ENCODE measurements at regions of chr6 and their contacts with region 1.

Region 1: GRCh38 chr6:78561015-78561414 is 306.3 kb upstream of the IRAK1BP1 start:
- DNase-seq: peak; percentile 49
- H3K4me3 ChIP-seq: no peak overlapping the region
- H3K27ac ChIP-seq: peak overlapping the region; percentile 18
- H3K4me1 ChIP-seq: peaks cover 38% of the 10 kb centered on the region
- H3K27me3 ChIP-seq: no peaks in the 10 kb centered on the region
- CTCF ChIP-seq: no peak
- POLR2A ChIP-seq: no peak

Region 2: GRCh38 chr6:78492351-78493017 is 68.5 kb before region 1 on chr6:
- CTCF ChIA-PET with region 1: interaction called, 4 read pairs
- POLR2A ChIA-PET with region 1: no interaction called
- dilution Hi-C with region 1: no loop called
- intact Hi-C with region 1: loop called (anchors 5 kb)
- DNase-seq: peak; percentile 82
- H3K4me3 ChIP-seq: peak overlapping the region in 1 of 3 experiments; percentile 19
- H3K27ac ChIP-seq: peak overlapping the region; percentile 63
- H3K4me1 ChIP-seq: peaks cover 53% of the 10 kb centered on the region
- H3K27me3 ChIP-seq: no peaks in the 10 kb centered on the region
- CTCF ChIP-seq: no peak
- POLR2A ChIP-seq: no peak

Region 3: DNA sequence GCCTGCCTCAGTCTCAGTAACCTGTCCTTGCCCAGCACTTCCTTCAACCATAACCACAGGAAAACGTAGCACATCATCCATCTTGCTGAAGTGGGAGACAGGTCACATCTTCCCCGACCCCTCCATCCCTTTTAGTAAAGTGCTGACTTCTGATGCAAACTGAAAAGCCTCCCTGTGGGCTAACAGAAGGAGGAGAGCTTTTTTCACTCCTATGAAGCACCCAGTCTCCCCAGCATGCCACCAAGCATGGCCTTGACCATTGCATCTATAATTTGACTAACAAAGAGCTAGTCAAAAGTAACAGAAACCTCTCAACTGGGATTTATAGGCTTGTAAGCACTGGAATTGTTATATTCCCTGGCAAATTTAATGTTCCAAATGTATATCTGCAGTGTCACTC is 17.4 kb after region 1 on chr6:
- CTCF ChIA-PET with region 1: interaction called, 14 read pairs
- POLR2A ChIA-PET with region 1: no interaction called
- dilution Hi-C with region 1: no loop called
- intact Hi-C with region 1: no loop called
- DNase-seq: no peak
- H3K4me3 ChIP-seq: no peak overlapping the region
- H3K27ac ChIP-seq: no peak overlapping the region
- H3K4me1 ChIP-seq: no peaks in the 10 kb centered on the region
- H3K27me3 ChIP-seq: no peaks in the 10 kb centered on the region
- CTCF ChIP-seq: no peak
- POLR2A ChIP-seq: no peak

Region 4: GRCh38 chr6:78619016-78619415 is 58.0 kb after region 1 on chr6:
- CTCF ChIA-PET with region 1: no interaction called
- POLR2A ChIA-PET with region 1: no interaction called
- dilution Hi-C with region 1: no loop called
- intact Hi-C with region 1: no loop called
- DNase-seq: no peak
- H3K4me3 ChIP-seq: no peak overlapping the region
- H3K27ac ChIP-seq: no peak overlapping the region
- H3K4me1 ChIP-seq: peaks cover 10% of the 10 kb centered on the region
- H3K27me3 ChIP-seq: no peaks in the 10 kb centered on the region
- CTCF ChIP-seq: no peak
- POLR2A ChIP-seq: no peak